ENCODE measurements at regions of chr14 and their contacts with region 1.

Region 1: DNA sequence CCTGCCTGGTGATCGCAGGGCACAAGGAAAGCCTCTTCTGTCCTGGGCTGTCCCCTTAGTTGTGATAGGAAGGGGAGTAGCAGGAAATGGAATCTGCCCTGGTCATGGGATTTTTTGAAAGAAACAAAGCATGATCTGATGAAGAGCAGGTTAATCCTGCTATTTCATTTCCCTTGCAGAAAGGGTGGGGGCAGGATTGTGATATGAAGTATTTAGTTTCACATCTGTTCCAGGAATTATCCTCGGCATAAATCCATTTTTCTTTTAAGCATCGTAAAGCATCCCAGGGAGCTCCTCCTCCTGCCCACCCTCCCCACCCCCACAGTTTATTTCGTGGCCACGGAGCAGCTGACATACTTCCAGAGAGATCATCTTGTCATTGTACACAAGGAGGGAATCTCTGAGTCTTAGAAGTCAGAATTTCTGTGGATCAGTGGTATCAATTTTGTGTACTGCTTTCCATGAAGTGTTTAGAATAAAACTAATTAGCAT is 53.1 kb downstream of the TGFB3 start:
- DNase-seq: no peak
- ATAC-seq: peak in 1 of 4 donors; percentile 45
- H3K4me3 ChIP-seq: peak overlapping the region in 7 of 12 donors; percentile 11 to 31 (median 29)
- H3K27ac ChIP-seq: peak overlapping the region in 2 of 12 donors; percentile 9 to 22
- H3K4me1 ChIP-seq: peaks cover 0 to 11% (median 0%) of the 10 kb centered on the region in 12 donors
- H3K27me3 ChIP-seq: no peaks in the 10 kb centered on the region
- CTCF ChIP-seq: no peak
- POLR2A ChIP-seq: no peak

Region 2: DNA sequence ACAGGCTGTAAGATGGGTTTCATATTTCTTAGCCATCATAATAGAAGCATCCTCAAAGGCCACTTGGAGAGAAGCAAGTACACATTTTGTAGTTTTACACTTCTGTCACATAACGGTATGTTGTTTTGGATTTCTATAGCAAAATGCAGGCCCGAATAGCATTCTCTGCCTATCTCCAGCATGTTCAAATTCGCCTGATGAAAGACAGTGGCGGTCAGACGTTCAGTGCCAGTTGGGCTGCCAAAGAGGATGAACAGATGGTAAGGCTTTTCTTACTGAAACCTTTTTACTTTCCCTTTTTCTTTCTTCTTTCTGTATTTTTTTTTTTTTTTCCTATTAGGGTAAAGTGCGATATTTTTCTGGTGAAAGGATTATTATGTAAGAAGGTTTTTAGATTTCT is 157.1 kb before region 1 on chr14:
- intact Hi-C with region 1: no loop called
- DNase-seq: no peak
- ATAC-seq: no peak
- H3K4me3 ChIP-seq: no peak overlapping the region
- H3K27ac ChIP-seq: no peak overlapping the region
- H3K4me1 ChIP-seq: peaks cover 0 to 13% (median 0%) of the 10 kb centered on the region in 12 donors
- H3K27me3 ChIP-seq: no peaks in the 10 kb centered on the region
- CTCF ChIP-seq: no peak
- POLR2A ChIP-seq: no peak

Region 3: GRCh38 chr14:75811872-75812499 is 116.8 kb before region 1 on chr14:
- intact Hi-C with region 1: no loop called
- DNase-seq: no peak
- ATAC-seq: no peak
- H3K4me3 ChIP-seq: no peak overlapping the region
- H3K27ac ChIP-seq: no peak overlapping the region
- H3K4me1 ChIP-seq: peaks cover 0 to 2% (median 0%) of the 10 kb centered on the region in 12 donors
- H3K27me3 ChIP-seq: no peaks in the 10 kb centered on the region
- CTCF ChIP-seq: no peak
- POLR2A ChIP-seq: no peak

Region 4: GRCh38 chr14:75968456-75968855 is 39.7 kb after region 1 on chr14:
- intact Hi-C with region 1: loop called in 1 of 10 experiments (anchors 5 kb)
- DNase-seq: peak in 1 of 5 donors; percentile 63
- ATAC-seq: peak in 3 of 4 donors; percentile 65 to 78 (median 71)
- H3K4me3 ChIP-seq: no peak overlapping the region
- H3K27ac ChIP-seq: peak overlapping the region in 6 of 12 donors; percentile 3 to 63 (median 46)
- H3K4me1 ChIP-seq: peaks cover 0 to 31% (median 5%) of the 10 kb centered on the region in 12 donors
- H3K27me3 ChIP-seq: no peaks in the 10 kb centered on the region
- CTCF ChIP-seq: no peak
- POLR2A ChIP-seq: no peak

Measured in heart left ventricle (tissue), 16 donors.